Activated naive CD8-positive, alpha-beta T cell treated with anti-CD3 and anti-CD28 coated beads, Interleukin-2, amount 10 ng/mL, durations not matched to agents 7 days and 5 days (primary cell): ENCODE measurements at regions of chr17 and their contacts with region 1.

Region 1: DNA sequence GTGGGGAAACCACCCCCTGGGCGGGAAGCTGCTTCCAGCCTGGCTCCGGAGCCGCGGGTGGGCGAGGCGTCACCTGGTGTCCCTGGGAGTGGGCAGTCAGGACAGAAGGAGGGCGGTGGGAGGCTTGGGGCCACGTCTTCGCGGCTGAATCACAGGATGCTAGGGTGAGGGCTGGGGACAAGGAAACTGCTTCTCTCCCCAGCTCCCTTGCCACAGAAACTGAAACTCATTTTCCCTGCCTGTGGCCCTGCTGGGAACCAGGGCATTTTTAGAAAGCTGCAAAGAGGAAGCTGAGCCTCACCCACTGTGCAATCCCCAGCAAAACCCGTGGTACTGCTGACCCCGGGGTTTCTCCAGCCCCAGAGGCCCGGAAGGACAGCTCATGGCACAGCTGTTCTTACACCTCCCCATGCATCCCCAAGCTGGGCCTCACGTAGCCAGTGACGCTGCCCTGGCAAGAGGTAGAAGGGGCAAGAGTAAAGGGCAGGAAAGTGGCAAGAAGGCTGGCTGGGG is 8.2 kb downstream of the RHBDF2 start:
- DNase-seq: peak; percentile 61
- ATAC-seq: peak; percentile 59
- H3K4me3 Mint-ChIP-seq: peak overlapping the region; percentile 86
- H3K27ac Mint-ChIP-seq: peak overlapping the region; percentile 98
- H3K4me1 Mint-ChIP-seq: peaks cover 40% of the 10 kb centered on the region
- H3K27me3 Mint-ChIP-seq: no peaks in the 10 kb centered on the region

Region 2: DNA sequence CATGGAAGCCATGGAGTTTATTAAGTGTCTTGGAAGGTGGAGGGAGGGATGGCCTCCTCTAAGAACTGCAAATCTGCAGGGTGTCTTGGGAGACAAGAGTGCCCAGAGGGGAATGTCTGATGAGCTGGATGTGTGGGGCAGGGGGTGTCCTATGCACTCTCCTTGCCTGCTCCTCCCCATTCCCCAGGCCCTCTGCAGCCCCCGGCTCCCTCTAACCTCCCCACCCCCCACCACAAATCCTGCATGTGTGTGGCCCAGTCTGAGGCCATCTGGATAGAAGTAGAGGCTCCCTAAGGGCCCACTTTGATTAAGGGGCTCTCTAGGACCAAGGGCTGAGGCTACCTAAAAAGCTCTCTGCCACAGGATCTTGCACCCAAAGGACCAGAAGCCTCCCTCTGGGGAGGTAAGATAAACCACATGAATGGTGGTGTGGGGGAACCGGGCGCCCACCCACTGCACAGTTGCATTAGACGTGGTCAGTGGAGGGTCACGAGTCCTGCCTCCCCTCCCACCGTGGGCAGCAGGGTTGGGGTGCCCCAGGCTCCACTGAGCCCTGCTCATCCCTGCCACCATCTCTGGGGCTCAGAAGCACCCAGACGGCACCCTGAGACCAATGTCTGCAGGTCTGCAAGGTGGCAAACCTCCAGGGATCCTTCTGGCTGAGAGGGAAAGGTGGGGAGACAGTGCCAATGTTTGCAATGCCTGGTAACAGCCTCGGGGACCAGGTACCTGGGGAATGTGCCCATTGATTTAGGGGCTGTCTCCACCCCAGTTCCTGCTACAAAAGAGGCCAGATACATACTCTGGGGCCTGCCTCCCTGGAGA is 25.0 kb before region 1 on chr17:
- POLR2A ChIA-PET with region 1: no interaction called
- DNase-seq: no peak
- ATAC-seq: no peak
- H3K4me3 Mint-ChIP-seq: no peak overlapping the region
- H3K27ac Mint-ChIP-seq: no peak overlapping the region
- H3K4me1 Mint-ChIP-seq: peaks cover 7% of the 10 kb centered on the region
- H3K27me3 Mint-ChIP-seq: peaks cover 2% of the 10 kb centered on the region

Region 3: DNA sequence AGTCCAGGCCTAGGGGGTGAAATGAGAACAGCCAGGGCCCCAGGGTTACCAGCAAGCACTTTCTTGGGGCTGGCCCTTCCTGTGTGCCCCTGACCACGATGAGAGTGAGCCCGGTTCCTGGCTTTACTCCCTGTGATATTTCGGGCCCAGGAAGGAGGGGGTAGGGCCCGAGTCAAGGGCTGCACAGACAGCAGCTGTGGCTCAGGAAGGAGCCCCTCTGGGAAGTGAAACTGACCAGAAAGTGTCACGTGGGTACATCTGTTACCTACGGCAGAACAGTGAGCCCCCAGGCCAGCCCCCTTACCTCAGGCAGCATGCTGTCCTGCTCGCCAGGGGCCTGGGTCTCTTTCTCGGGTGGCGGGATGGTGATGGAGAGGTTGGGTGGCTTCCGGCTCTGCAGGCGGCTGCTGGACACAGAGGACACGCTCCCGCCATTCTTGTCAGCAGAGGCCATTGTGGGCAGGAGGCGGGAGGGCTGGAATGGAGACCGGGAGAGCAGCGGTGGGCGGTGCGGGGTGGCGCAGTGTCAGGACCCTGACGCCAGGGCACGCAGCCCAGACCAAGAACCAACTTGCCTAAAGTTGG is 11.9 kb before region 1 on chr17:
- POLR2A ChIA-PET with region 1: interaction called, 22 read pairs
- DNase-seq: peak; percentile 47
- ATAC-seq: peak; percentile 69
- H3K4me3 Mint-ChIP-seq: peak overlapping the region; percentile 37
- H3K27ac Mint-ChIP-seq: peak overlapping the region; percentile 82
- H3K4me1 Mint-ChIP-seq: peaks cover 19% of the 10 kb centered on the region
- H3K27me3 Mint-ChIP-seq: no peaks in the 10 kb centered on the region